ENCODE measurements at regions of chr5 and their contacts with region 1.

Region 1: DNA sequence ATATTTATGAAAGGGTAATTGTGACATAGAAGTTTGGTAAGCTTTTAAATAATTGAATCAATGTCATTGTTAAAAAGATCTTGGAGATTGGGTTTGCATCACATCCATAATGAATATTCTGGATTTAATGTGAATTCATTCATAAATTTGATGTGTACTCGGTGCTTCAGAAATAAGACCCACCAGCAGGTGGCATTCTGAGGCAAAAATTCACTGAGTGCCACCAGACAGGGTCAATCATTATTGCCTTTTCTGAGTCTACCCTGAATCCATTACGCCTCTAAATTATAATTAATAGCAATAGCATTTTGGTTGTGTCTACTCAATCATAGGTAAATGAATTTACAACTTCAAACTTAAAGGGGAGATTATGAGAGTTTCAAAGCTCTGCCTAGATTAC is 1.0 kb downstream of the TRPC7 start:
- DNase-seq: no peak
- ATAC-seq: no peak
- H3K4me3 ChIP-seq: no peak overlapping the region
- H3K27ac ChIP-seq: no peak overlapping the region
- H3K4me1 ChIP-seq: no peaks in the 10 kb centered on the region
- H3K27me3 ChIP-seq: peaks cover 14% of the 10 kb centered on the region; the same call in 1 of the 2 replicates
- CTCF ChIP-seq: peak; percentile 42 to 69 (median 51); a peak in 4 of 6 replicates
- POLR2A ChIP-seq: no peak
- RAD21 ChIP-seq: peak; percentile 50

Region 2: DNA sequence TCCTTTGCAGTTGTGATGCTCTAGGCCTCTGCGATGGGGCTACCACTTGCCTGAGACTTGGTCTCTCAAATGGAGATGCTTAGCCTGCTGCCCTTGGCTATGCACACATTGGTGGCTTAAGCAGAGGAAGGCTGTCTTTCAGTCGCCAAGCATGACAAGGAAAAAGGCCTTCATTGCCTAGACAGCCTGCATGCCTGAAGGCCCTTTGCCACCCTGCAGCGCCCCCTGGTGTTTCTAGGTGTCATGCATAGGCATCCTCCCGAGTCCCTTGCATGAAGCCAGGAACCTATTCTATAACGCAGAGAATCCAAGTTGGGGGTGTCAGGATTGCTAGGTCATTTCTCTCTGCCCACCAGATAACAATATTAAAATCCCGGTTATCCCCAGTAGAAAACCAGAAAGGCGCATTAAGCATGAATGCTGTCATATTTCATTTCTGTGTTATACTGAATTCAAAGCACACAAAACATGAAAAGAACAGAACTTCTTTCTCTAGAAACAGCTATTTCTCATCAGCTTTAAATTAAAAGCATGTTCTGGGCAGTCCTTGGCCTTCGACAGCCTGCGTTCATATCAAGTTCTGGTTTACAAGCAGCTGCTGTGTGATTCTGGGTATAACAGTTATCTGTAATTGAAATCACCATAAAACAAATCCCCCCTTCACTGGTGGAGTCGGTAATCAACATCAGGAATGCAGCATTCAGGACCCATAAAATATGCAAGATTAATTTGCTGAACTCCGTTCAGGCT is 60.7 kb after region 1 on chr5:
- CTCF ChIA-PET with region 1: no interaction called
- POLR2A ChIA-PET with region 1: no interaction called
- RAD21 ChIA-PET with region 1: no interaction called
- intact Hi-C with region 1: loop called (anchors 2 kb)
- DNase-seq: peak; percentile 47
- ATAC-seq: peak; percentile 99
- H3K4me3 ChIP-seq: no peak overlapping the region
- H3K27ac ChIP-seq: no peak overlapping the region
- H3K4me1 ChIP-seq: no peaks in the 10 kb centered on the region
- H3K27me3 ChIP-seq: peaks cover 22% of the 10 kb centered on the region
- CTCF ChIP-seq: peak; percentile 75 to 93 (median 93)
- POLR2A ChIP-seq: no peak
- RAD21 ChIP-seq: peak; percentile 76

Region 3: GRCh38 chr5:136686192-136686872 is 322.0 kb after region 1 on chr5:
- CTCF ChIA-PET with region 1: no interaction called
- POLR2A ChIA-PET with region 1: no interaction called
- RAD21 ChIA-PET with region 1: no interaction called
- intact Hi-C with region 1: loop called (anchors 10 kb)
- DNase-seq: no peak
- ATAC-seq: peak; percentile 81
- H3K4me3 ChIP-seq: no peak overlapping the region
- H3K27ac ChIP-seq: no peak overlapping the region
- H3K4me1 ChIP-seq: no peaks in the 10 kb centered on the region
- H3K27me3 ChIP-seq: no peaks in the 10 kb centered on the region
- CTCF ChIP-seq: peak; percentile 22 to 55 (median 50); a peak in 5 of 6 replicates
- POLR2A ChIP-seq: no peak
- RAD21 ChIP-seq: peak; percentile 52

Region 4: DNA sequence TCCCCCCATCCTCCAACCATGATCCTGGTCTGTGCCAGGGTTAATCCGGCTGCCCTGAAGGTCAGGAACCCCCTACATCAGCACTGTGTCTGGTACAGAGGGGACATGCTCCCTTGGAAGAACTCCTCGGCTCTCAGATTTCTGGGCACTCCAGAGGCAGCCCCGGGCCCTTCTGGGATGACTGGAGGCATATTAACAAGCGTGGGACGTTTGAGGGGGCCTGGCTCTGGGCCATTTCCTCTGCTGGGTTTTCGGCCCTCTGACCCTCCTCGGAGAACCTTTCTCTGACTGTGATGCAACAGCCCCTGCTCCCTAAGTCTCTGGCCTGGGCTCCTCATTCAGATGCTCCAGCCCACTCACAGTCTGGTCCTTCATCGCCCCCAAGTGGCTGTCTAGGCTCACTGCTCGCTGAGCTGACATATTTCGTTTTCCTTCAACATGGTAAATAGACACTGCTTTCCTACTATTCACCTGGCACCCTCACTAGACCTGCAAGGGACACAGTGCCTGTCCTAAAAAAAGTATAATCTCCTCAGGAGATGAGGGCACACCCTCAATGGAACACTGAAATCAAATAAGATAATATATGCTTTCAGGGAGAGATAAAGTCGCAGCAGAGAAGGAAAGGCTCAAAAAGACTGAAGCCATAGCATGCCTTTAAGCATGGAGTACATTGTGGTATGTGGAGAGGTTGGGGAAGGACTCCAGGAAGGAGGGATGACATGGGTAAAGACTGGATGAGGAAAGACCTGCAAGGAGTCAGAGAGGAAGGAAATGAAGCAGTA is 405.8 kb after region 1 on chr5:
- CTCF ChIA-PET with region 1: interaction called, 6 read pairs
- POLR2A ChIA-PET with region 1: no interaction called
- RAD21 ChIA-PET with region 1: no interaction called
- intact Hi-C with region 1: loop called (anchors 2 kb)
- DNase-seq: peak; percentile 33
- ATAC-seq: peak; percentile 96
- H3K4me3 ChIP-seq: no peak overlapping the region
- H3K27ac ChIP-seq: no peak overlapping the region
- H3K4me1 ChIP-seq: no peaks in the 10 kb centered on the region
- H3K27me3 ChIP-seq: peaks cover 14% of the 10 kb centered on the region; the same call in 1 of the 2 replicates
- CTCF ChIP-seq: peak; percentile 49 to 86 (median 84); a peak in 5 of 6 replicates
- POLR2A ChIP-seq: no peak
- RAD21 ChIP-seq: peak; percentile 79